Activated B cell treated with CpG ODN at 0.5 μM for 24 hours (primary cell): ENCODE measurements at regions of chr15 and their contacts with region 1.

Region 1: GRCh38 chr15:88657326-88658069 is 18.7 kb downstream of the ISG20 start:
- DNase-seq: no peak
- ATAC-seq: peak; percentile 7
- H3K4me3 Mint-ChIP-seq: no peak overlapping the region
- H3K27ac Mint-ChIP-seq: peak overlapping the region; percentile 94
- H3K4me1 Mint-ChIP-seq: peaks cover 75% of the 10 kb centered on the region
- H3K27me3 Mint-ChIP-seq: no peaks in the 10 kb centered on the region
- CTCF ChIP-seq: no peak

Region 2: DNA sequence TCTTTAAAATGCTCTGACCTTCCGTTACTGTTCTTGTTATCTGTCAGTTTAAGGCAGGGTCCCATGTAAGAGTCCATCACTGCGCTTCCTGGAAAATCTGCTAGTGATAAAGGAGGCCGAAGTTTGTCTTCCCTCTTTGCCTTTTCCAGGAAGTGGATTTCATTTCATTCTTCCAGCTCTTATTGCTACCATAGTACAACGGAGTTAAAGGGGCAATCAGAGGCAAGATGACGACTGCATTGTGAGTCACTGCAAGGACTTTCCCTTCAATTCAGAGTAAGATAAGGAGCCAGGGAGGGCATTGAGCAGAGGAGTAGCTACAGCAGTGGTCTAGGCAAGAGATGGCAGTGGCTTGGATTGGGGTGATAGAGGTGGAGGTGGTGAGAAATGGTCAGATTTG is 93.9 kb before region 1 on chr15:
- CTCF ChIA-PET with region 1: no interaction called
- POLR2A ChIA-PET with region 1: no interaction called
- intact Hi-C with region 1: no loop called
- DNase-seq: no peak
- ATAC-seq: no peak
- H3K4me3 Mint-ChIP-seq: no peak overlapping the region
- H3K27ac Mint-ChIP-seq: no peak overlapping the region
- H3K4me1 Mint-ChIP-seq: no peaks in the 10 kb centered on the region
- H3K27me3 Mint-ChIP-seq: peaks cover 3% of the 10 kb centered on the region
- CTCF ChIP-seq: no peak

Region 3: DNA sequence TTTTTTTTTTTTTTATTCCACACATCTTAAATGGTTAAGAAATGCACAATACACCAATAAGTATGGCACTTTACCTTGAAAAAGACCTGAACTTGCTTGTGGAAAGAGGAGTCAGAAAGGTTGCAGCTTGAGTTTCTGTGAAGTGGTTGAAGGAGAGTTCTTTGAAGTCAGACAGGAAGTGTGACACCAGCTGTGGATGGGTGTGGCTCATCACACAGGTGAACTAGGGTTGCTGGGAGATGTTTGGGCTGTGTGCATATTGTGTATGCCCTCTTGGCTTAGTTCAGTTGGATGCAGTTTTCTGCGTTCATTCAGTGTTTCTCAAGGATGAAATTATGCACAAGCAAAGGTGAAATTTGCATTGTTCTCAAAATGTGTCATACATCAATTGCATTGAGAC is 30.0 kb before region 1 on chr15:
- CTCF ChIA-PET with region 1: interaction called, 79 read pairs
- POLR2A ChIA-PET with region 1: interaction called, 42 read pairs
- intact Hi-C with region 1: loop called (anchors 2 kb)
- DNase-seq: no peak
- ATAC-seq: peak; percentile 50
- H3K4me3 Mint-ChIP-seq: peak overlapping the region; percentile 53
- H3K27ac Mint-ChIP-seq: peak overlapping the region; percentile 82
- H3K4me1 Mint-ChIP-seq: peaks cover 92% of the 10 kb centered on the region
- H3K27me3 Mint-ChIP-seq: no peaks in the 10 kb centered on the region
- CTCF ChIP-seq: no peak

Region 4: DNA sequence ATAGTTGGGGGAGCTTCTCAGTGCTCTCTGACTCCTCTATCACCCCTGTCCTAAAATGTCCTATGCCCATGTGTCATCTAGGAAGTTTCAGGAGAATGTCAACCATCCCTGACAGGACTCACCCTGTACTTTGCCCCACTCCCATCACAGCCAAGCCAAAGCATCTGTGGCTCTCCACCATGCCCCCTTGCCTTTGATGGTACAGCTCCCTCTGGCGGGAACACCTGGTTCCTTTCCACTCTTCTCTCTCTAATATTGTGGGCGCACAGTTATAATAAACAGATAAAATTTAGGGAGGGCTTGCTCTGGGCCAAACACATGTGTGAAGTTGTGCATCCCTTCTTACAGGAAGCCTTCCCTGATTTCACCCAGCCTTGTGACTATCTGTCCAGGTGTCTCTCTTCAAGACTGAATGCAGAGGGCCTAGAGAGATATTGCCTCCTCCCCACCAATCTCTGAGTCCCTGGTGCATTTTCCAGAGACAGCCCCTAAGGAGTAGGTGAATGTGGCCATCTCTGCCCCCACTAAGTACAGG is 44.1 kb after region 1 on chr15:
- CTCF ChIA-PET with region 1: no interaction called
- POLR2A ChIA-PET with region 1: no interaction called
- intact Hi-C with region 1: loop called (anchors 5 kb)
- DNase-seq: no peak
- ATAC-seq: no peak
- H3K4me3 Mint-ChIP-seq: no peak overlapping the region
- H3K27ac Mint-ChIP-seq: no peak overlapping the region
- H3K4me1 Mint-ChIP-seq: peaks cover 13% of the 10 kb centered on the region
- H3K27me3 Mint-ChIP-seq: peaks cover 20% of the 10 kb centered on the region
- CTCF ChIP-seq: no peak

Region 5: DNA sequence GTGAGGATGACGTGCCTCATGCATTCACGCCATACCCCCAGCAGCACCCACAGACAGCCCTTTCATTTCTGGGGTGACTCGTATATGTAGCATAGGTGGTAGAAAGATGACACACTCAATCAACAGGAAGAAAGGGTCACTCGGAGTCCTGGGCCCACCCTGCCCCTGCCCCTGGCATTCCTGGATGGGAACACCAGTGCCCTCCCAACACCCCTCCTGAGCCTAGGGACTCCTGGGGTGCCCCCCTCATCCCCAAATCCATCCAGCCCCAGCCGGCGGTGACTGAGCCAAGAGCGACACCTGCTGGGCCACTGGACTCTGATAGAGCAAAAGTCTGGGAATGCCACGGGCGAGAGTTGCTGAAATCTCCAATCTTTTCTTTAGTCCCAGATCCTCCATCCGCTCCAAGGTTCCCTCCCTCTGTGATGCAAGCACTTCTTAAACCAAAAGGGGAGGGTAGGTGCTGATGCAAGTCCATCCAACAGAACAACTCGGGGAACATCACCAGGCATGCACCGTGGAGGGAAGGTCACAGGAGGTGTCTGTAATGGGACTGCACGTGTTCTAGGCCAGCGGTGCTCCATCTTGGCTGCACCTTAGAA is 176.8 kb after region 1 on chr15:
- CTCF ChIA-PET with region 1: interaction called, 3 read pairs
- POLR2A ChIA-PET with region 1: no interaction called
- intact Hi-C with region 1: loop called (anchors 1 kb)
- DNase-seq: no peak
- ATAC-seq: no peak
- H3K4me3 Mint-ChIP-seq: no peak overlapping the region
- H3K27ac Mint-ChIP-seq: no peak overlapping the region
- H3K4me1 Mint-ChIP-seq: no peaks in the 10 kb centered on the region
- H3K27me3 Mint-ChIP-seq: no peaks in the 10 kb centered on the region
- CTCF ChIP-seq: no peak